ENCODE measurements at regions of chr12 and their contacts with region 1.

Region 1: DNA sequence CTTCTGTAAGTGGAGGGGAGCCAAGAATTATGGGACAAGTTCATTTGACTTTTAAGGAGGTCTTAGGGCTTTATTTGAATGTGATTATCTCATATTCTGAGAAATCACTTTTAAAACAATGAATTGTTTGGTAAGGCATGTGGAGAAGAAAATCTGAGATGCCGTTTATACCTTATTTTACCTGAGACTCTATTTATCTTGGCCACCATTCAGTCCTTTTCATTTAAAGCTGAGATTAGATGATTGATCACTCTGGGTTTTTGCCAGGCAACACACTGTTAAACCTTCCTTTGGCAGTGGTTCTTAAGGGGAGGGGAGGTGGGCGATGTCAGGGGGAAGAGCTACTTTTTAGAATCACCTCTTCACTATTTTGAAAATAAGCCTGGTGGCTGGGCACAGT is 11.4 kb downstream of the CAND1 start:
- DNase-seq: no peak
- CTCF ChIP-seq: no peak

Region 2: GRCh38 chr12:67052981-67053380 is 227.6 kb before region 1 on chr12:
- CTCF ChIA-PET with region 1: no interaction called
- POLR2A ChIA-PET with region 1: no interaction called
- DNase-seq: no peak
- CTCF ChIP-seq: no peak

Region 3: GRCh38 chr12:67268896-67269631 is 11.5 kb before region 1 on chr12 and contains the start of gene CAND1:
- CTCF ChIA-PET with region 1: interaction called, 11 read pairs
- POLR2A ChIA-PET with region 1: interaction called, 5 read pairs
- DNase-seq: peak; percentile 92
- CTCF ChIP-seq: peak; percentile 18